Endothelial cell of umbilical vein (primary cell): ENCODE measurements at regions of chr1 and their contacts with region 1.

Region 1: DNA sequence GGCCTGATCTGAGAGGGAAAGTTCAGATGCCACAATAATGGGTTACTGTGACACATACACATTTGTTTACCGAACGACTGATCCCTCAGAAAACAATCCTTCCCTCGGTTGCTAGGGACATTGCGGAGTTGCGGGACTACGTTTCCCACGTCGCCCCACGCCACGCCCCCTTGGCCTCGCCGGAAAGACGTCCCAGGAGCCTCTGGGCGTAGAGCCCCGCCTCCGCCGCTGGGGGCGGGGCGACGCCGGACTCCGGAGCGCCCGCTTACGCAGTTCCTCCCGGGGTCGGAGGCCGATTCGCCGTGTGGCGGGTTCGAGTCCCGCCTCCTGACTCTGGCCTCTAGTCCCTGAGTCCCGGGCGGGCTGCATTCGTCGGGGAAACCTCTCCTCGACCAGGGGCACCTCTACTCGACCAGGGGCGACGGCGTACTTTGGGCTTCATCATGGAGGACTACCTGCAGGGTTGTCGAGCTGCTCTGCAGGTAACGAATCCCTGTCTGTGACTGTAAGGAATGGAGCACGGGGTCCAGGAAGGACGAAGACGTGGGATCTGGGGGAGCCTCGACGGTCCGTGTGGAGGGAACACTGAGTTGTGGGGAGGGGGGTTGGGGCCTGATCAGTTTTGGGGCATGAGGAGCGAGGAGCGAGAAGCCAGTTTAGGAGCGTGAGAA is at the start of gene PRUNE1:
- DNase-seq: peak; percentile 98
- H3K4me3 ChIP-seq: peak within 1 kb of the TSS; percentile 7 to 82 (median 52)
- H3K27ac ChIP-seq: peak within 1 kb of the TSS; percentile 88
- H3K4me1 ChIP-seq: peaks cover 28% of the 10 kb centered on the region
- H3K27me3 ChIP-seq: no peaks in the 10 kb centered on the region
- CTCF ChIP-seq: no peak
- POLR2A ChIP-seq: no peak
- total RNA-seq, gene PRUNE1: 8.0 and 8.6 TPM in 2 replicates

Region 2: DNA sequence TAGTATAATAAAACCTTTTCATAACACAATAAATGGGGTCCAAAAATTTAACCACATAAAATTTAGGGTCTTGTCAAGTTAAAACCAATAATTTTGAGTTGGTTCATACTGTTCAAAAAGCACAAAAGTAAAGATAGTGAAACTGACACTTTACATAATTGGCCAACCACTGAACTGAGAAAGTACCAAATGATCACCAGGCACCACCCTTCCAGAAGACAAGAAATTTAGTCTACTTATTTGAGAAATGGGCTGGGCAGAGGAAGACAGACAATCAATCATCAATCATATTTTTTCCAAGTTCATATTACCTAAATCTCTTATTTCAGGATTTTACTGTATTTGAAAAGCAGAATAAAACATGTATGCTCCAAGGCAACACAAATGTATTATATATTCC is 304.9 kb before region 1 on chr1:
- CTCF ChIA-PET with region 1: no interaction called
- POLR2A ChIA-PET with region 1: no interaction called
- dilution Hi-C with region 1: no loop called
- intact Hi-C with region 1: no loop called
- DNase-seq: no peak
- H3K4me3 ChIP-seq: no peak overlapping the region
- H3K27ac ChIP-seq: no peak overlapping the region
- H3K4me1 ChIP-seq: no peaks in the 10 kb centered on the region
- H3K27me3 ChIP-seq: no peaks in the 10 kb centered on the region
- CTCF ChIP-seq: no peak
- POLR2A ChIP-seq: no peak

Region 3: GRCh38 chr1:150798525-150798924 is 209.8 kb before region 1 on chr1:
- CTCF ChIA-PET with region 1: no interaction called
- POLR2A ChIA-PET with region 1: no interaction called
- dilution Hi-C with region 1: no loop called
- intact Hi-C with region 1: no loop called
- DNase-seq: no peak
- H3K4me3 ChIP-seq: no peak overlapping the region
- H3K27ac ChIP-seq: no peak overlapping the region
- H3K4me1 ChIP-seq: peaks cover 3% of the 10 kb centered on the region
- H3K27me3 ChIP-seq: no peaks in the 10 kb centered on the region
- CTCF ChIP-seq: no peak
- POLR2A ChIP-seq: no peak

Region 4: GRCh38 chr1:150925816-150926741 is 82.2 kb before region 1 on chr1 and contains the start of gene SETDB1:
- CTCF ChIA-PET with region 1: interaction called, 4 read pairs
- POLR2A ChIA-PET with region 1: no interaction called
- dilution Hi-C with region 1: no loop called
- intact Hi-C with region 1: loop called (anchors 1 kb)
- DNase-seq: peak; percentile 97
- H3K4me3 ChIP-seq: peak within 1 kb of the TSS; percentile 78 to 97 (median 91)
- H3K27ac ChIP-seq: peak within 1 kb of the TSS; percentile 84
- H3K4me1 ChIP-seq: peaks cover 6% of the 10 kb centered on the region
- H3K27me3 ChIP-seq: no peaks in the 10 kb centered on the region
- CTCF ChIP-seq: no peak
- POLR2A ChIP-seq: peak; percentile 72
- total RNA-seq, gene SETDB1: 42.0 and 49.2 TPM in 2 replicates

Region 5: GRCh38 chr1:150987924-150988323 is 20.4 kb before region 1 on chr1:
- CTCF ChIA-PET with region 1: interaction called, 278 read pairs
- POLR2A ChIA-PET with region 1: no interaction called
- dilution Hi-C with region 1: no loop called
- intact Hi-C with region 1: no loop called
- DNase-seq: no peak
- H3K4me3 ChIP-seq: no peak overlapping the region
- H3K27ac ChIP-seq: no peak overlapping the region
- H3K4me1 ChIP-seq: no peaks in the 10 kb centered on the region
- H3K27me3 ChIP-seq: no peaks in the 10 kb centered on the region
- CTCF ChIP-seq: no peak
- POLR2A ChIP-seq: no peak

Region 6: GRCh38 chr1:151024540-151025146 is 16.3 kb after region 1 on chr1:
- CTCF ChIA-PET with region 1: interaction called, 14 read pairs
- POLR2A ChIA-PET with region 1: no interaction called
- dilution Hi-C with region 1: no loop called
- intact Hi-C with region 1: no loop called
- DNase-seq: peak; percentile 74
- H3K4me3 ChIP-seq: no peak overlapping the region
- H3K27ac ChIP-seq: no peak overlapping the region
- H3K4me1 ChIP-seq: no peaks in the 10 kb centered on the region
- H3K27me3 ChIP-seq: no peaks in the 10 kb centered on the region
- CTCF ChIP-seq: peak; percentile 76 to 88
- POLR2A ChIP-seq: no peak

Region 7: DNA sequence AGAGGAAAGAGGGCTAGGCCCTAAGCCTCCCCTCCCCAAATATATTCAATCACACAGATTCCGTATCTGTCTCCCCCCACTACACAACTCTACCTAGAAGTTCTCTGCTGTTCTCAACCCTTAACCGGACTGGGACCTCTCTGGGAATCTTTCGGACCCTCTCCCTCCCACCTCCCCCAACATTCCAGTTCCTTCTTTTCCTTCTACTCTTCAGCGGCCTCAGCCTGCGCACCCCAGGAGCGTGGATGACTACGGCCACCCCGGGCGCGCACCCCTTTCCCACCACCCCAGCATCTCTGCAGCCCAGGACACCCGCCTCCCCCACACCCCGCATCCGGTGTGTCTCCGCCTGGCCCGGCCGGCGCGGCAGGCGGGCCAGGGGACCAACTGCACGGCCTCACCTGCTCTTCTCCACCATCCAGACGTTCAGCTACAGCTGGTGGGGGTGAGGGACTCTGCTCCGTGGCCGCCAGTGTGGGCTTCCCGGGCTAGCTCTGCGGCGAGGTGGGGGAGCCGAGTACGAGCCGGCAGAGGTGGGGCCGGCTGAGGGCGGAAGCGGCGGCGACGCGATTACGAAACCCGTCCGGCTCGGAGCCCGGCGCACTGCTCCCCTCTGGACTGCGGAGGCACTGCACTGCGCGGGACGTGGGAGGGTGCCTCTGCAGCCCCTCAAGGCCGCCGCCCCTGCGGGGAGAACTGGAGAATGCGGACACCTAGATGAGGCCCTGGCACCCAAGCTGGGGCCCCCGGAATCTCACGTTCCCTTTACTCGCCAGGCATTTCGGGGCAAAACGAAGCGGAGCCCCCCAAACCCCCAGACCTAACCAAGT is 51.0 kb after region 1 on chr1 and contains the start of gene CDC42SE1:
- CTCF ChIA-PET with region 1: interaction called, 16 read pairs
- POLR2A ChIA-PET with region 1: no interaction called
- dilution Hi-C with region 1: no loop called
- intact Hi-C with region 1: loop called (anchors 2 kb)
- DNase-seq: peak; percentile 87
- H3K4me3 ChIP-seq: peak within 1 kb of the TSS; percentile 82 to 94 (median 91)
- H3K27ac ChIP-seq: peak within 1 kb of the TSS; percentile 91
- H3K4me1 ChIP-seq: peaks cover 33% of the 10 kb centered on the region
- H3K27me3 ChIP-seq: no peaks in the 10 kb centered on the region
- CTCF ChIP-seq: peak; percentile 60 to 88
- POLR2A ChIP-seq: peak; percentile 89
- total RNA-seq, gene CDC42SE1: 85.9 and 92.7 TPM in 2 replicates

Region 8: DNA sequence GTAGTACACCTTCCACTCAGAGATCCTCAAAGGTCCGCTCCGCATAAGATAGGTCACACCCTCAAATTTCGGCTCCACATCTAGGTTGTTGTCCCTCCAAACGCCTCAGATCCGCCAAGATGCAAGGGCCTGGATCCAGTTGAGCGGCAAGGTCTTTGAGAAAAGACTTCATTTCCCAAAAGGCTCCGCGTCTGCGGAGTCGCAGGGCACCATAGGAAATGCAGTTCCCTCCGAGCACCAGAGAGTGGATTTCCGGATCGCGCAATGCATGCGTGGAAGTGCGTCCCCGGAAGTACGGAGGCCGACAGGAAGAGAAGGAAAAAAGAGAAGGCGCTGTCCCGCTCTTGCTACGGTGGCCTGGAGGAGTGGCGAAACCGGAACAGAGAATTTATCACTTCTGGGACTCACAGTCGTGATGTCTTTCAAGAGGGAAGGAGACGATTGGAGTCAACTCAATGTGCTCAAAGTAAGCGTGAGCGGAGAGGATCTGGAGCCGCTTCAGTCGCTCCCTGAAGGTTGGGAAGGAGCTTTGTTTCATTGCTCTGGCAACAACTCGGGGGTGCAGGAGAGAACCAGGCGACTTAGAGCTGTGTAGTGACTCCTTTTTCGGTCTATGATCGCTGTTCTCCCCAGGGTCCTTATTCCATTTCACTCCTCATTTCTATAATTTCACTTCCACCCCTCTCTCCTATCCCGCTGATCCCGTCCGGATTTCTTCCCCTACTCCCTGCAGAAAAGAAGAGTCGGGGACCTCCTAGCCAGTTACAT is 157.6 kb after region 1 on chr1 and contains the starts of genes LYSMD1 and SCNM1:
- CTCF ChIA-PET with region 1: interaction called, 3 read pairs
- POLR2A ChIA-PET with region 1: no interaction called
- dilution Hi-C with region 1: no loop called
- intact Hi-C with region 1: loop called (anchors 1 kb)
- DNase-seq: peak; percentile 98
- H3K4me3 ChIP-seq: peak within 1 kb of the TSS; percentile 65 to 89 (median 81)
- H3K27ac ChIP-seq: peak within 1 kb of the TSS; percentile 65
- H3K4me1 ChIP-seq: peaks cover 19% of the 10 kb centered on the region
- H3K27me3 ChIP-seq: no peaks in the 10 kb centered on the region
- CTCF ChIP-seq: no peak
- POLR2A ChIP-seq: peak; percentile 69
- total RNA-seq, gene LYSMD1: 6.4 and 8.2 TPM in 2 replicates
- total RNA-seq, gene SCNM1: 43.1 and 49.0 TPM in 2 replicates